ENCODE measurements at regions of chr19 and their contacts with region 1.

Region 1: GRCh38 chr19:3146677-3147100 is 10.9 kb downstream of the GNA15 start:
- H3K4me3 ChIP-seq: no peak overlapping the region
- H3K27ac ChIP-seq: no peak overlapping the region
- H3K4me1 ChIP-seq: no peaks in the 10 kb centered on the region
- CTCF ChIP-seq: peak; percentile 82

Region 2: DNA sequence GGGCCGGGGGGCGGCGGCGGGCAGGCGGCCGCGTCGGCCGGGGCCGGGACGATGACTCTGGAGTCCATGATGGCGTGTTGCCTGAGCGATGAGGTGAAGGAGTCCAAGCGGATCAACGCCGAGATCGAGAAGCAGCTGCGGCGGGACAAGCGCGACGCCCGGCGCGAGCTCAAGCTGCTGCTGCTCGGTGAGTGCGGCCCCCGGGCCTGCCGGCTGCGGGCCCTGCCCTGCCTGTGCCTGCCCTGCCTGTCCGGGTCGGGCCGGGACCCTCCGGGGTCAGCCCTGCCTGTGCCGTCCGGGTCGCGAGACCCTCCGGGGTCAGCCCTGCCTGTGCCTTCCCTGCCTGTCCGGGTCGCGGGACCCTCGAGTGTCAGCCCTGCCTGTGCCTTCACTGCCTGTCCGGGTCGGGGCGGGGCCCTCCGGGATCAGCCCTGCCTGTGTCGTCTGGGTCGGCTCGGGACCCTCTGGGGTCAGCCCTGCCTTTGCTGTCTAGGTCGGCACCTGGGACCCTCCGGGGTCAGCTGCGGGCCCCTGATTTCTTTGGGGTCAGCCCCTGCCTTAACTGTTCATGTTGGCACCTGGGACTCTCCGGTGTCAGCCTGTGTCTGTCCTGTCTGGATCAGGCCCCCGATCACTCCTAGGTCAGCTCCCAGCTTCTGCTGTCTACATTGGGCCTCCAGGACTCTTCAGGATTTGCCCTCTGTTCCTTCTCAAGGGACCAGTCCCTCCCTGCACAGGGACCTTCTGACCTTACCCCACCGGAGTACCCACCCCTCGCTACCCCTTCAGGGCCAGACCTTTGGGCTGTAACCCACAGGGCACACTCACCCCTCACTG is 51.9 kb before region 1 on chr19:
- CTCF ChIA-PET with region 1: no interaction called
- POLR2A ChIA-PET with region 1: no interaction called
- H3K4me3 ChIP-seq: peak overlapping the region; percentile 78
- H3K27ac ChIP-seq: peak overlapping the region; percentile 75
- H3K4me1 ChIP-seq: peaks cover 6% of the 10 kb centered on the region; the same call in 1 of the 2 replicates
- CTCF ChIP-seq: no peak

Region 3: GRCh38 chr19:3135961-3136683 is 10.6 kb before region 1 on chr19 and contains the start of gene GNA15:
- CTCF ChIA-PET with region 1: interaction called, 13 read pairs
- POLR2A ChIA-PET with region 1: no interaction called
- H3K4me3 ChIP-seq: no peak within 1 kb of the TSS
- H3K27ac ChIP-seq: no peak within 1 kb of the TSS
- H3K4me1 ChIP-seq: no peaks in the 10 kb centered on the region
- CTCF ChIP-seq: no peak

Measured in HEK293 (cell line).